Activated T-helper 1 cell treated with anti-CD3 and anti-CD28 coated beads, Interleukin-12 subunit alpha, Interleukin-12 subunit beta, Interleukin-2, Interleukin-4 antibody, amounts not matched to agents 30 ng/mL and 10 ng/mL and 1 ng/mL, durations not matched to agents 14 hours and 24 hours and 36 hours (primary cell): ENCODE measurements at regions of chr6 and their contacts with region 1.

Region 1: GRCh38 chr6:87407901-87408720 is at the start of gene CFAP206:
- DNase-seq: peak; percentile 66
- H3K4me3 Mint-ChIP-seq: peak within 1 kb of the TSS; percentile 84
- H3K27ac Mint-ChIP-seq: peak within 1 kb of the TSS; percentile 76
- H3K4me1 Mint-ChIP-seq: peaks cover 16% of the 10 kb centered on the region
- H3K27me3 Mint-ChIP-seq: peaks cover 28% of the 10 kb centered on the region
- total RNA-seq, gene CFAP206: 0.20 TPM in 1 of 2 replicates, not detected in the other

Region 2: GRCh38 chr6:86215323-86215722 is 1192.8 kb before region 1 on chr6:
- intact Hi-C with region 1: no loop called
- DNase-seq: no peak
- H3K4me3 Mint-ChIP-seq: no peak overlapping the region
- H3K27ac Mint-ChIP-seq: no peak overlapping the region
- H3K4me1 Mint-ChIP-seq: no peaks in the 10 kb centered on the region
- H3K27me3 Mint-ChIP-seq: no peaks in the 10 kb centered on the region

Region 3: DNA sequence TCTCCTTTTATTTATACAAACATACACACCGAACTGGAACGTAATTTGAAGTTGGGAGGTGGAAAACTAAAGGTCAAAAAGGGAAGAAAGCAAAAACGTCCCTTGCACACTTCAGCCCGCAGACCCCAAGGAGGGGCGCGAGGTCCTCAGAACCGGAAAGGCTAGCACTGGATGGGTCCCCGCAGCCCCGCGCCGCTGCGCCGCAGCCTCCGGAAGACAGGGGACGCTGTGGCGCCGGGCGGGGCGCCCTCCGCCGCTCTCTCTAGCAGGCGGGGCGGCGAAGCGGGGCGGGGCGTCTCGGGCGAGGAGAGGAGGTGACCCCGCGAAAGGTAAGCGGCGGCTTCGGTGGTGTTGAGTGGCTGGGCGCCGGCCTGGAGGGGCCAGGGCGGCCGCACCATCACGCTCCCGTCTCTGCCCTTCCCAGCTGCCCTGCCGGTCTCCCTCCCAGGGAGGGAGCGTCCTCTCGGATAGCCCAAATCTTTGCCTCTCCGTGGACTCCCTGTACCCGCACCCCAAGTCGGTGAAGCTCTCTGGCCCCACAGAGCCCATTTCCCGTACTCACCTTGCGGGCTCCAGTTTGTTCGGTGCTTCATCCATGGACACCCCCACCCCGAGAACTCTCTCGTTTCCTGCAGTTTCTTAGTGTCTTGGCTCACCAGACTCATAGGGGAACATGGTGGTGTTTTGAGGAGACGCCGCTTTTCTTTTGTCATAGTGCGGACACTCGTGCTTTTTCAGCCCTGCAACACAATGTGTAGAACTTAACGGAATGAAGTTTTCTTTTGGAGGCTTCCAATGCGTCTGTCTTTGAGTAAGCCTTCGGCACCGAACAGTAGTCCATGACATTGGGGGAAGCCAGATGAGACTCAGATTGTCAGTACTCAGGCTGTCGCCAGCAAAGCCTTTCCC is 85.6 kb before region 1 on chr6 and contains the start of gene SMIM8:
- intact Hi-C with region 1: loop called (anchors 2 kb)
- DNase-seq: peak; percentile 84
- H3K4me3 Mint-ChIP-seq: peak within 1 kb of the TSS; percentile 99
- H3K27ac Mint-ChIP-seq: peak within 1 kb of the TSS; percentile 92
- H3K4me1 Mint-ChIP-seq: peaks cover 8% of the 10 kb centered on the region
- H3K27me3 Mint-ChIP-seq: peaks cover 3% of the 10 kb centered on the region
- total RNA-seq, gene SMIM8: 7.3 and 9.2 TPM in 2 replicates